ENCODE measurements at regions of chr1 and their contacts with region 1.

Region 1: GRCh38 chr1:242065813-242066212 is 66.9 kb upstream of the MAP1LC3C start:
- DNase-seq: no peak
- H3K4me3 ChIP-seq: no peak overlapping the region
- H3K27ac ChIP-seq: no peak overlapping the region
- H3K4me1 ChIP-seq: no peaks in the 10 kb centered on the region
- H3K27me3 ChIP-seq: no peaks in the 10 kb centered on the region
- CTCF ChIP-seq: no peak

Region 2: GRCh38 chr1:242030071-242030470 is 35.7 kb before region 1 on chr1:
- CTCF ChIA-PET with region 1: no interaction called
- POLR2A ChIA-PET with region 1: no interaction called
- intact Hi-C with region 1: loop called (anchors 2 kb)
- DNase-seq: no peak
- H3K4me3 ChIP-seq: no peak overlapping the region
- H3K27ac ChIP-seq: no peak overlapping the region
- H3K4me1 ChIP-seq: no peaks in the 10 kb centered on the region
- H3K27me3 ChIP-seq: no peaks in the 10 kb centered on the region
- CTCF ChIP-seq: no peak

Measured in A673 (cell line).